Colonic mucosa (tissue), 4 donors: ENCODE measurements at regions of chr20 and their contacts with region 1.

Region 1: DNA sequence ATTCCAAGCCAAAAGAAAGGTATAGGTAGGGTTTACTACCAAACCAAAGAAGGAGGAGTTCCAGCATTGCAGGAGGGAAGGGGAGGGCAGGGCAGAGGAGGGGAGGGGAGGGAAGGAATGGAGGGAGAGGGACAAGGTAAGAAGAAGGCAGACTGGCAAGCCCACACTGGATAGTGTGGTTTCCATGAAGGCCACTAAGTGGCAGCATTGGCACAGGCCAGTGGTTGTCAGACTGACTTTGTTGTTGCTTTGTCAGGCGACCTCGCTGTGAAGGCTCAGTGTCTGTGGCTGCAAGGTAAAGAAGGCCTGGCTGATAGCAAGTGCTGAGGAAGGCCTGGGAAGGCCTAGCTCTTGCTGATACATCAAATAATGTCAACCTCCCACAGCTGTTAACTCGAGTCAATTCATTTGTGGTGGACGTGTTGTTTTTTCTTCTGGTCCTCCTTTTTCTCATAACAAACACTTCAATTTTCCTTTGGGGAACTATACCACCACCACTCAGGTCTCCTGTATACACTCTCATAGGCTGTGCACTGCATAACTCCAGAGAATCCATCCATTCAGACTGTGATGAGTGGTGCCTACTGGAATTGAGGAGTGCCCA is 7.7 kb upstream of the ZNF334 start:
- DNase-seq: peak; percentile 38
- H3K4me3 ChIP-seq: no peak overlapping the region
- H3K27ac ChIP-seq: no peak overlapping the region
- H3K4me1 ChIP-seq: no peaks in the 10 kb centered on the region
- H3K27me3 ChIP-seq: no peaks in the 10 kb centered on the region
- CTCF ChIP-seq: peak; percentile 44

Region 2: GRCh38 chr20:45020236-45020886 is 1500.7 kb before region 1 on chr20:
- intact Hi-C with region 1: no loop called
- DNase-seq: no peak
- H3K4me3 ChIP-seq: no peak overlapping the region
- H3K27ac ChIP-seq: no peak overlapping the region
- H3K4me1 ChIP-seq: no peaks in the 10 kb centered on the region
- H3K27me3 ChIP-seq: no peaks in the 10 kb centered on the region
- CTCF ChIP-seq: no peak

Region 3: DNA sequence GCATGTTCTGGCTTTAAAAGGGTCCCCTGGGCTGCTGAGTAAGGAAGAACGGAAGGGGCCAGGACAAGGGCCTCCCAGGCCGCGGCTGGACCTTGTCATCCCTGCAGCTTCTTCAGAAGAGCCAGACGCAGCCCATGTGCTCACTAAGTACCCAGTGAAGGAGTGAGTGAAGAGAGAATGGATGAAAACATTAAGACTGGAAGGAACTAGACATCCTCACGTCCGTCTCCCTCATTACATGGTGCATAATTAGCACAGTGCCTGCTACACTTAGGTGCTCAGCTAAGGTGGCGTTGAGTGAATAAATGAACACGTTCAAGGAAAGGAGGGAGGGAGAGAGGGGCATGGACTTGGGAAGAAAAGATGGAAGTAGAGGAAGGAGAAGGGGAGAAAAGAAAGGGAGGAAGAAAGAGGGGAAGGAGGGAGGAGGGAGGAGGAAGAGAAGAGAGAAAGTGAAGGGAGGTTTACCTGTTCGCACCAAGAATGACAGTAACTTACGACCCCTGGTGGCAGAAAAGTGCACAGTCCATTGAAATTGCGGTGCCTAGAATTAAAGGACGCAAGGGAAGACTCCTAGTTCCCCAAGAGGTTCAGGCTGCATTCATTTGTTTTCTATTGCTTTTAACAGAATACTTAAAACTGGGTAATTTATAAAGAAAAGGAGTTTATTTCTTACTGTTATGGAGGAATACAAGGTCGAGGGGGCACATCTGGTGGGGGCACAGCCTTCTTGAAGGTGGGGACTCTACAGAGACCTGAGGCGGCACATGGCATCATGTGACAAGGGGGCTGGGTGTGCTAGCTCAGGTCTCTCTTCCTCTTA is 160.2 kb after region 1 on chr20:
- intact Hi-C with region 1: loop called (anchors 5 kb)
- DNase-seq: peak; percentile 79
- H3K4me3 ChIP-seq: no peak overlapping the region
- H3K27ac ChIP-seq: no peak overlapping the region
- H3K4me1 ChIP-seq: no peaks in the 10 kb centered on the region
- H3K27me3 ChIP-seq: no peaks in the 10 kb centered on the region
- CTCF ChIP-seq: peak; percentile 73

Region 4: DNA sequence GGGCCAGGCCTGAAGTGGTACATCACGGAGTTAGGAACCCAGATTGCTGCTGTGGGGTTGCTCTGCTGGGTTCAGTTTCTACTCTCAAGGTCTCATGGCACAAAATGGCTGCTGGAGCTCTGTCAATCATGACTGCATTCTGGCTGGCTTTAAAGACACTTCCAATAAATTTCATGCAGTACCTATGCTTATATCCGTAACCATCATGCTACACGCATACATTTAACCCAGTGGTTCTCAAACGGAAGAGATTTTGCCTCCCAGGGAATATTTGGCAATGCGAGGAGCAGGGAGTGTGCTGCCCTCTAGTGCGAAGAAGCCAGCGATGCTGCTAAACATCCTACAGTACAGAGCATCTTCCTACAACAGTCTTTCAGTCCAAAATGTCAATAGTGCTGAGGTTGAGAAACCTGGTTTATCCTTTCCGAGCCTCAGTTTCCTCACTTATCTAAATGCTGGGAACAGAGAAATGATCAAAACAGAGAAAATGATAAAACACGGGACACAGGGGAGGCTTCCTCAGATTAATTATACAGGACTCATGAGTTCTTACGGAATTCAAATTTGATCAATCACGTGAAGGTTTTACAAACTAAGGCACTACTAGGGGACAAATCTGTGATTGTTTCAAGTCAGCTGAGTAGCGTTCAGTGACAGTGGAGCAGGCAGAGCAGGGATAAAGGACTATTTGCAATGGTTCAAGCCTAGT is 178.7 kb after region 1 on chr20:
- intact Hi-C with region 1: loop called (anchors 5 kb)
- DNase-seq: no peak
- H3K4me3 ChIP-seq: no peak overlapping the region
- H3K27ac ChIP-seq: no peak overlapping the region
- H3K4me1 ChIP-seq: no peaks in the 10 kb centered on the region
- H3K27me3 ChIP-seq: no peaks in the 10 kb centered on the region
- CTCF ChIP-seq: peak; percentile 50